ENCODE measurements at regions of chr1 and their contacts with region 1.

Region 1: GRCh38 chr1:40338745-40339424 is 21.8 kb upstream of the COL9A2 start:
- DNase-seq: peak; percentile 80 to 91 (median 81)
- H3K4me3 ChIP-seq: peak overlapping the region; percentile 45
- H3K4me3 Mint-ChIP-seq: peak overlapping the region in 5 of 7 donors; percentile 24 to 59 (median 48)
- H3K27ac ChIP-seq: no peak overlapping the region
- H3K27ac Mint-ChIP-seq: peak overlapping the region in 7 of 8 donors; percentile 3 to 67 (median 26)
- H3K4me1 ChIP-seq: peaks cover 26% of the 10 kb centered on the region
- H3K4me1 Mint-ChIP-seq: peaks cover 25 to 31% (median 29%) of the 10 kb centered on the region in 3 donors
- H3K27me3 ChIP-seq: no peaks in the 10 kb centered on the region
- H3K27me3 Mint-ChIP-seq: peaks cover 0 to 2% of the 10 kb centered on the region in 2 donors

Region 2: DNA sequence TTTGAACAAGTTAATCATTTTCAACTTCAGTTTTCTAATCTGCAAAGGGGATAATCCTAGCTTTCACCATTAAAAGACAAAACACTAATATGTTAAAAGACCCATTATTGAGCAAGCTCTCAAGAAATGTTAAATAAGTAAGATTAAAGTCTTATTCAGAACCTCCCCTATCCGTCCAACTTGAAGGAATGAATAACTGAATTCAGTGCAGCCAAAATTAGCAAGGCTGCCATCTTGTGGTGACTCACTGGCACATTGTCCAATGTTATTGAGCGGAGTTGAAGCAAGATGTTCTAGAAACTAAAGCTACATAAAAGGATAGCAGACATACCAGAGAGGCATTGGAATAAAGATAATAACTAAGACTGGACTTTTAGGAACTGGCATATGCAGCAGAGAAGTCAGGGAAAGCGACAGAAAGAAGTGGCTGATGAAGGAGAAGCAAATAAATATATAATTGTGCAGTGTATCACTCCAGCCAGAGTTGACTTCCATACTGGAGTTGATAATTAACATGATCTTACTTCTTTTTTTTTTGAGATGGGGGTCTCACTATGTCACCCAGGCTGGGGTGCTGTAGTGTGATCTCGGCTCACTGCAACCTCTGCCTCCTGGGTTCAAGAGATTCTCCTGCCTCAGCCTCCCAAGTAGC is 306.5 kb before region 1 on chr1:
- CTCF ChIA-PET with region 1: no interaction called
- POLR2A ChIA-PET with region 1: no interaction called
- DNase-seq: peak; percentile 21 to 66 (median 38)
- H3K4me3 ChIP-seq: no peak overlapping the region
- H3K4me3 Mint-ChIP-seq: peak overlapping the region in 1 of 7 donors; percentile 1
- H3K27ac ChIP-seq: no peak overlapping the region
- H3K27ac Mint-ChIP-seq: peak overlapping the region in 6 of 8 donors; percentile 12 to 89 (median 70)
- H3K4me1 ChIP-seq: peaks cover 50% of the 10 kb centered on the region
- H3K4me1 Mint-ChIP-seq: peaks cover 37 to 53% (median 45%) of the 10 kb centered on the region in 3 donors
- H3K27me3 ChIP-seq: no peaks in the 10 kb centered on the region
- H3K27me3 Mint-ChIP-seq: peaks cover 0 to 1% of the 10 kb centered on the region in 2 donors

Region 3: GRCh38 chr1:40143891-40144575 is 194.9 kb before region 1 on chr1:
- CTCF ChIA-PET with region 1: interaction called, 47 read pairs
- POLR2A ChIA-PET with region 1: no interaction called
- DNase-seq: peak; percentile 9 to 60 (median 44)
- H3K4me3 ChIP-seq: no peak overlapping the region
- H3K4me3 Mint-ChIP-seq: no peak overlapping the region
- H3K27ac ChIP-seq: no peak overlapping the region
- H3K27ac Mint-ChIP-seq: no peak overlapping the region
- H3K4me1 ChIP-seq: no peaks in the 10 kb centered on the region
- H3K4me1 Mint-ChIP-seq: peaks cover 3 to 6% (median 3%) of the 10 kb centered on the region in 3 donors
- H3K27me3 ChIP-seq: peaks cover 5% of the 10 kb centered on the region
- H3K27me3 Mint-ChIP-seq: peaks cover 23 to 40% of the 10 kb centered on the region in 2 donors

Region 4: DNA sequence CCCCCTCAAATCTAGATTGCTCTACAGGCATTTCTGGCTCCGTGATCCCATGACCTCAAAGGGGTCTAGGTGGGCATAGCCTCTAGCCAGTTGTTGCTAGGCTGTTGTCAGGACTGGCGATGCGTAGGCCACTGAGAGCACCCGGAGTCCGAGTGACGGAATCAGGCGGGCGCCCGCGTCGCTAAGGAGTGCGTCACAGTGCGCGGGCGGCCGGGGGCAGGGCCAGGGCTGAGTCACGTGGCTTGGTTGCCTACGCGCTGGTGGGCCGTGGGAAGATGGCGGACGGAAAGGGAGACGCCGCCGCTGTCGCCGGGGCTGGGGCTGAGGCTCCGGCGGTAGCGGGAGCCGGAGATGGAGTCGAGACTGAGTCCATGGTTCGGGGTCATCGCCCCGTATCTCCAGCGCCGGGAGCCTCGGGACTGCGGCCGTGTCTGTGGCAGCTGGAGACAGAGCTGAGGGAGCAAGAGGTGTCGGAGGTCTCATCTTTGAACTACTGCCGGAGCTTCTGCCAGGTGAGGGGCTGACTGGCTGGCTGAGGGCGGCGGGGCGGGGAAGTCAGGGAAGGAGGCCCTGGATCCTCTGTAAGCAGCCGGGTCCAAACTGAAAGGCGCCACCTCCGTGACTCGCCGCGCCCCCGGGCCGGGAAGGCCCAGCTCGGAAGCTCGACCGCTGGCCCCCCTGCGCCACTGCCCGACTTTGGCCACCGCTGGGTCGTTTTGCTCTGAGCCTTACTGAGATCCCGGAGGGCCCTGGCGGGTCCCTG is 177.6 kb before region 1 on chr1 and contains the start of gene RLF:
- CTCF ChIA-PET with region 1: interaction called, 10 read pairs
- POLR2A ChIA-PET with region 1: interaction called, 3 read pairs
- DNase-seq: peak; percentile 90 to 96 (median 93)
- H3K4me3 ChIP-seq: peak within 1 kb of the TSS; percentile 84
- H3K4me3 Mint-ChIP-seq: no peak within 1 kb of the TSS
- H3K27ac ChIP-seq: peak within 1 kb of the TSS; percentile 98
- H3K27ac Mint-ChIP-seq: peak within 1 kb of the TSS in 1 of 8 donors; percentile 98
- H3K4me1 ChIP-seq: peaks cover 43% of the 10 kb centered on the region
- H3K4me1 Mint-ChIP-seq: peaks cover 6 to 17% (median 7%) of the 10 kb centered on the region in 3 donors
- H3K27me3 ChIP-seq: no peaks in the 10 kb centered on the region
- H3K27me3 Mint-ChIP-seq: no peaks in the 10 kb centered on the region
- total RNA-seq, gene RLF: 13.6 to 14.0 TPM

Region 5: DNA sequence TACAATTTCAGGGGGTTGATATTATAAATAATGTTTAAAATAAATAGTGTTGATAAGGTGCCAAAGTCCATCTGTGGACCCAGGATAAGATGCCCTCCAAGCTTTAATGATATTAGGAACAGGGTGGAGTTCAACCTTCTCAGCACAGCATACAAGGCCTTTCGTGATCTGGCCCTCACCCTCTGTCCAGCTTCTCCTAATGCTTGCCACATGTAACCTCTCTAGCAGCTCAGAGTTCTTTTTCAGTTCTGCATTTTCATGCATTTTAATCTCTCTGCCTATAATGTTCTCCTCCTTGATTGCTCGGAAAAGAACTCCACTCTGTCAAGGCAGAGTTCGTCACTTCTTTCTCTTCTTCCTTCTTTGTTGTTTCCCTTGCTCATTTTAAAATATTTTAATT is 13.2 kb after region 1 on chr1:
- CTCF ChIA-PET with region 1: interaction called, 11 read pairs
- POLR2A ChIA-PET with region 1: no interaction called
- DNase-seq: no peak
- H3K4me3 ChIP-seq: no peak overlapping the region
- H3K4me3 Mint-ChIP-seq: no peak overlapping the region
- H3K27ac ChIP-seq: no peak overlapping the region
- H3K27ac Mint-ChIP-seq: peak overlapping the region in 2 of 8 donors; percentile 21 to 87
- H3K4me1 ChIP-seq: no peaks in the 10 kb centered on the region
- H3K4me1 Mint-ChIP-seq: no peaks in the 10 kb centered on the region
- H3K27me3 ChIP-seq: no peaks in the 10 kb centered on the region
- H3K27me3 Mint-ChIP-seq: no peaks in the 10 kb centered on the region

Region 6: DNA sequence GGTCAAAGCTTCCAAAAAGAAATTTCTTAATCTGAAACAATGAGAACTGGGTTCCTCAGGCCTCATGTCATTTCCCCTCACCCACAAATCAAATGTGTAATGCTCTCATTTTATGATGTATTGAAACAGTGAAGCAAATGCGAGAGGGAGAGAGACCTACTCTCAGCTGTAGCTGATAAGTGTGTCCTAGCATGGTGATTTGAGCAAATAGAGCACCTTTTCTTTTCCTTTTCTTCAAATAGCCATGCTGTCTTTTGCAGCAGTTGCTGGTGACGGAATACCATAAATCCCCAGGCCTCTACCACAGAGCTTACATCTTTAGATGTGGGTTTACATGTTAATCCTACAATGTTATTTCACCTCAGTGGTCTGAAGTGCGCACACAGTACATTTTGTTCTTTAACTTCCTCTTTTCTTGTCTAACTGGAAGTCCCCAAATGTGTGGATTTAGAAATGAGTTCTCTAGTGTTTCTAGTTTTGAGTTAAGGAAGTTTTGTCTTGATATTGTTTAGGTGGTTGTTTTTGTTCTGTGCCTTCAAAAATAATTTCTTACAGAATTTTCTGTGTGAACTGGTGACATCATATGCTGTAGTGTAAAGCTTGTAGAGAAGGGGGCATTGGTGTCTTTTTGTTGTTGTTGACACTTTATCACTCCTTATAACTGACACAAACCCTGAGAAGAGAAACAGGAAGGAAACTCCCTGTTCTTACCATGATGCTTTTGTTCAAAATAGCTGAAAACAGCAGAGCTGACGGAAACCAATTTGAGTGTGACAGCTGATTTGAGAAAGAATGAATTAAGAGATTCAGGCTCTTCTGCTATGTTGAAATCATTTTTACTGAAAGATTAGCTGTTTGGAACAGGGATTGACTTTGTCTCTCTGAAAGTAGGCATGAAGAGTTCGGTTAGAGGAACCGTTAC is 46.8 kb after region 1 on chr1:
- CTCF ChIA-PET with region 1: interaction called, 30 read pairs
- POLR2A ChIA-PET with region 1: interaction called, 5 read pairs
- DNase-seq: peak; percentile 38 to 93 (median 81)
- H3K4me3 ChIP-seq: peak overlapping the region; percentile 63
- H3K4me3 Mint-ChIP-seq: peak overlapping the region; percentile 72 to 90 (median 84)
- H3K27ac ChIP-seq: peak overlapping the region; percentile 95
- H3K27ac Mint-ChIP-seq: peak overlapping the region; percentile 90 to 100 (median 98)
- H3K4me1 ChIP-seq: peaks cover 89% of the 10 kb centered on the region
- H3K4me1 Mint-ChIP-seq: peaks cover 89 to 96% (median 95%) of the 10 kb centered on the region in 3 donors
- H3K27me3 ChIP-seq: no peaks in the 10 kb centered on the region
- H3K27me3 Mint-ChIP-seq: no peaks in the 10 kb centered on the region

Region 7: DNA sequence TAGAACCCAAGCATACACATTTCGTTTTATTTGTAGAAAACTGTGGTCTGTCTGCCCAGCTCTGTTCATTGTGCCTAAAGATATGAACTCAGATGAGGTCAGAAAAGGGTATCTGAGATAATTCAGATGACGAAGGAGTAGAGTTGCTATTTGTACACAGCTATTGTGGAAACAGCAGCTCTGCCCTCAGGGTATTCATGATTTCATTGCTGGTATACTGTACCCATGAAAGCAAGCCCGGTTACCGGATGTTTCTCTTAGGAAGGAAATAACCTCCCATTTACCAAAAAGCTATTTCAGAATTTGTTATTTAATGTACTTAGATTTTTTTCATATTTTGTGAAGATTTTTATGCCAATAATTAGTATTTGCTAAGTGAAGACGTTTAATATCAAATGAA is 72.4 kb after region 1 on chr1:
- CTCF ChIA-PET with region 1: interaction called, 14 read pairs
- POLR2A ChIA-PET with region 1: no interaction called
- DNase-seq: no peak
- H3K4me3 ChIP-seq: no peak overlapping the region
- H3K4me3 Mint-ChIP-seq: no peak overlapping the region
- H3K27ac ChIP-seq: no peak overlapping the region
- H3K27ac Mint-ChIP-seq: peak overlapping the region in 1 of 8 donors; percentile 69
- H3K4me1 ChIP-seq: peaks cover 8% of the 10 kb centered on the region
- H3K4me1 Mint-ChIP-seq: peaks cover 24 to 61% (median 57%) of the 10 kb centered on the region in 3 donors
- H3K27me3 ChIP-seq: no peaks in the 10 kb centered on the region
- H3K27me3 Mint-ChIP-seq: peaks cover 0 to 3% of the 10 kb centered on the region in 2 donors